K562 (cell line): ENCODE measurements at regions of chr6 and their contacts with region 1.

Region 1: DNA sequence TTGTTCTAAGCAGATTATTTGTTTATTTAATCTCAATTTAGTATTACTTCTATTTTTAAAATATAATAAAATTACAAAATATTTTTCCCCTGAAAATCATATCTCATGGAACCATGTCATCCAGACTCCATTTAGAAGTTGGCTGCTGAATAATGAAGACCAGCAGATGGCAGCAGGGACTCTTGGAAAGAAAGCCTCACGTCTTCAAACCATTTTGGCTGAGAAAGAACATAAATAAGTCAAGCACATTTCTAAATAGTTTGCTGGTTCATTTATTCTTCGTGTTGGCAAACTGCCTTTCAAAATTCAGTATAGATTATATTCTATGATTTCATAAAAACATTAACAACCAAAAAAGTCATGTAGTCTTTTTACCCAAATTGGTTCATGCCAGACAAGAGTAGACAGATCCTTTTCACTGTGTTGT is 71.7 kb downstream of the RCAN2 start:
- DNase-seq: peak; percentile 35 to 68 (median 44)
- ATAC-seq: peak; percentile 76; the same call in 2 of the 3 replicates
- H3K4me3 ChIP-seq: no peak overlapping the region
- H3K27ac ChIP-seq: no peak overlapping the region
- H3K4me1 ChIP-seq: no peaks in the 10 kb centered on the region
- H3K27me3 ChIP-seq: no peaks in the 10 kb centered on the region
- CTCF ChIP-seq: peak; percentile 58 to 86 (median 71)
- EP300 ChIP-seq: no peak
- POLR2A ChIP-seq: no peak
- RAD21 ChIP-seq: peak; percentile 93 to 98

Region 2: GRCh38 chr6:46160102-46160501 is 259.5 kb before region 1 on chr6:
- CTCF ChIA-PET with region 1: no interaction called
- POLR2A ChIA-PET with region 1: no interaction called
- in situ Hi-C with region 1: no loop called
- intact Hi-C with region 1: no loop called
- DNase-seq: no peak
- ATAC-seq: no peak
- H3K4me3 ChIP-seq: no peak overlapping the region
- H3K27ac ChIP-seq: no peak overlapping the region
- H3K4me1 ChIP-seq: no peaks in the 10 kb centered on the region
- H3K27me3 ChIP-seq: no peaks in the 10 kb centered on the region
- CTCF ChIP-seq: no peak
- EP300 ChIP-seq: no peak
- POLR2A ChIP-seq: no peak
- RAD21 ChIP-seq: no peak

Region 3: DNA sequence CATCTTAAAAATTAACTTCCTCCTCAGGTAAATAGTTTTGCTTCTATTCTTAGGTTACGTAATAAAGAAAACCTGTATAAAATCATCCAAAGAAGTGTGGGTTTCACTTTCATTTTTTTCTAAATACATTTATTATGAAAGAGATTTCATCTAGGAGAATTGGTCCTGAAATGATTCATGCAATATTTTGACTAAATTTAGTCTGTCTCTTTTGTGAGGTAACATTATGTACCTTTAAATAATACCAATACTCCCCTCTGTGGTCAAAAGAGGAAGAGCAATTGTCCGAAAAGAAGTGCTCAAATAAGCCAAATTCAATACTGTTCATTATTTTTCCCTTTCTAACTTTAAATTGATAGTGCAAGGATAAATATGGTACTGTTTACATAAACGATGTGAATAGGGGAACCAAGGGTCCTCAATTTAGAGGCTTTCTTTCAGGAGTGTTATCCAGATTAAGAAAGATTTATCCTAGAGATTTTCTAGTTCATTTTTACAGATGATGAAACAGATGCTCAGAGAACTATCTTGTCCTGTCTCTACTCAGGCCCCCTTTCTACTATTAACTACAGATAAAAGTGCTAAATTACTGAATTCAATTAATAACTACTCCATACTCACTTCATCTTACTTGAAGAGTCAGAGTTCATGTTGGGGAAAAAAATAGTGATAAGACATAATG is 206.8 kb after region 1 on chr6:
- CTCF ChIA-PET with region 1: interaction called, 3 read pairs
- POLR2A ChIA-PET with region 1: no interaction called
- in situ Hi-C with region 1: loop called (anchors 10 kb)
- intact Hi-C with region 1: loop called (anchors 1 kb)
- DNase-seq: peak in 1 of 4 experiments; percentile 19
- ATAC-seq: peak; percentile 62; the same call in 2 of the 3 replicates
- H3K4me3 ChIP-seq: no peak overlapping the region
- H3K27ac ChIP-seq: no peak overlapping the region
- H3K4me1 ChIP-seq: no peaks in the 10 kb centered on the region
- H3K27me3 ChIP-seq: no peaks in the 10 kb centered on the region
- CTCF ChIP-seq: peak in 2 of 3 experiments; percentile 35 to 60; a peak in 4 of 6 replicates
- EP300 ChIP-seq: no peak
- POLR2A ChIP-seq: no peak
- RAD21 ChIP-seq: peak; percentile 63 to 79

Region 4: GRCh38 chr6:46781478-46782378 is 362.1 kb after region 1 on chr6:
- CTCF ChIA-PET with region 1: interaction called, 4 read pairs
- POLR2A ChIA-PET with region 1: no interaction called
- in situ Hi-C with region 1: no loop called
- intact Hi-C with region 1: loop called (anchors 2 kb)
- DNase-seq: peak; percentile 36 to 69 (median 54)
- ATAC-seq: peak; percentile 82
- H3K4me3 ChIP-seq: no peak overlapping the region
- H3K27ac ChIP-seq: no peak overlapping the region
- H3K4me1 ChIP-seq: no peaks in the 10 kb centered on the region
- H3K27me3 ChIP-seq: no peaks in the 10 kb centered on the region
- CTCF ChIP-seq: peak; percentile 50 to 72 (median 57); a peak in 5 of 6 replicates
- EP300 ChIP-seq: no peak
- POLR2A ChIP-seq: no peak
- RAD21 ChIP-seq: peak; percentile 42 to 65; a peak in 3 of 4 replicates

Region 5: GRCh38 chr6:46993846-46994245 is 574.3 kb after region 1 on chr6:
- CTCF ChIA-PET with region 1: interaction called, 19 read pairs
- POLR2A ChIA-PET with region 1: interaction called, 3 read pairs
- in situ Hi-C with region 1: loop called (anchors 5 kb)
- intact Hi-C with region 1: loop called (anchors 1 kb)
- DNase-seq: no peak
- ATAC-seq: no peak
- H3K4me3 ChIP-seq: no peak overlapping the region
- H3K27ac ChIP-seq: no peak overlapping the region
- H3K4me1 ChIP-seq: no peaks in the 10 kb centered on the region
- H3K27me3 ChIP-seq: no peaks in the 10 kb centered on the region
- CTCF ChIP-seq: no peak
- EP300 ChIP-seq: no peak
- POLR2A ChIP-seq: no peak
- RAD21 ChIP-seq: no peak